ENCODE measurements at regions of chr10 and their contacts with region 1.

Region 1: GRCh38 chr10:83539528-83540308 is 599.6 kb upstream of the GHITM start:
- DNase-seq: peak; percentile 69 to 90
- ATAC-seq: peak; percentile 96 to 98 (median 97)
- H3K4me3 ChIP-seq: no peak overlapping the region
- H3K27ac ChIP-seq: peak overlapping the region; percentile 20 to 87 (median 70)
- H3K4me1 ChIP-seq: peaks cover 0 to 38% (median 18%) of the 10 kb centered on the region in 9 donors
- H3K27me3 ChIP-seq: no peaks in the 10 kb centered on the region
- CTCF ChIP-seq: no peak

Region 2: DNA sequence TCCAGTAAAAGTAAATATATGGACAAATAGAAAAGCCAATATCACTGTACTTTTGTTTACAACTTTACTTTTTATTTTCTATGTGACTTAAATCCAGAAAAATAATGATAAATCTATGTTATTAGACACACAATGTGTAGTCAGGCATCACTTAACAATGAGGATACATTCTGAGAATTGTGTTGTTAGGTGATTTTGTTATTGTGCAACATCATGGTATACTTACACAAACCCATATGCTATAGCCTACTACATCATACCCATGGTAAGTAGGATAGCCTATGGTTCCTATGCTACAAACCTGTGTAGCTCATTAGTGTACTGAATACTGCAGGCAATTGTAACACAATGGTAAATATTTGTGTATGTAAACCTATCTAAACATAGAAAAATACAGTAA is 182.1 kb before region 1 on chr10:
- intact Hi-C with region 1: no loop called
- DNase-seq: no peak
- ATAC-seq: no peak
- H3K4me3 ChIP-seq: no peak overlapping the region
- H3K27ac ChIP-seq: no peak overlapping the region
- H3K4me1 ChIP-seq: no peaks in the 10 kb centered on the region
- H3K27me3 ChIP-seq: no peaks in the 10 kb centered on the region
- CTCF ChIP-seq: no peak

Region 3: DNA sequence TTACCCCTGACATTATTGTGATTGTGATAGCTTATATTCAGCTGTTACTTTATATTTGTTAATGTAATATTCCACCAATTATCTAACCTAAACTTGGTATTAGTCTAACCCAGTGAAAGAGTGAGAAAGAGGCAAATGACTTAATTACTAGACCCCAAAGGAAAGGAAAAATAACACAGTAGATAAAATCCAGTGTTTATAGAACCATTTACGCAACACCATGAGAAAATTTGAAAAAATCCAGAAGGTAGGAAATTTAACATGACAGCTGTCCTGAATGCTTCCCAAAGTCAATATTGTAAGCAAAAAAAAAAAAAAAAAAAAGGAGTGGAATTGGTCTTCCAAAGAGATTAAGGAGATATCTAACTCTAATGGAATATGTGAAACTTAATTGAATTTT is 141.9 kb before region 1 on chr10:
- intact Hi-C with region 1: loop called in 1 of 10 experiments (anchors 10 kb)
- DNase-seq: no peak
- ATAC-seq: peak in 6 of 8 donors; percentile 43 to 74 (median 54)
- H3K4me3 ChIP-seq: no peak overlapping the region
- H3K27ac ChIP-seq: peak overlapping the region in 6 of 10 donors; percentile 15 to 71 (median 60)
- H3K4me1 ChIP-seq: no peaks in the 10 kb centered on the region
- H3K27me3 ChIP-seq: no peaks in the 10 kb centered on the region
- CTCF ChIP-seq: no peak

Measured in heart right ventricle (tissue), 16 donors.